Mammary epithelial cell (primary cell): ENCODE measurements at regions of chr2 and their contacts with region 1.

Region 1: GRCh38 chr2:156589381-156590079 is 153.4 kb downstream of the GPD2 start:
- DNase-seq: peak; percentile 25
- H3K4me3 ChIP-seq: no peak overlapping the region
- H3K27ac ChIP-seq: no peak overlapping the region
- H3K4me1 ChIP-seq: no peaks in the 10 kb centered on the region
- H3K27me3 ChIP-seq: no peaks in the 10 kb centered on the region
- CTCF ChIP-seq: peak; percentile 27 to 48

Region 2: DNA sequence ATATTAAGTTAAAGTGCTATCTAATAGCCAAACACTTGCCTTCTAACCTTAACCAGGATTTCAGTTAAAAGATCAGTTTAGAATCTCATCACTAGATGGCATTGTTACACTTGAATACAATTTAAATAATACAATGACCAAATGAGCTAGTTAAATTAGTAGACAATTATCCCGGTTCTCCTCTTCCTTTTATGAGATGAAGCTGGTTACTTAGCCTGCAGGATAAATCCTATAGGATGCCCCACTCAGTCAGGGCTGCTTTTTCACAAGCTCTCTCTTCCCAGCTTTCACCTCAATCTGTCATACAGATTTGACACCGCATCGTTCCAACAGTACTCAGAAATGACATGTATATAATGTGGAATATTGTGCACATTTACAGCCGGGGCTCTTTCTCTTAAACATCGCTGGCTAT is 1212.3 kb before region 1 on chr2:
- CTCF ChIA-PET with region 1: no interaction called
- dilution Hi-C with region 1: no loop called
- in situ Hi-C with region 1: loop called (anchors 25 kb)
- intact Hi-C with region 1: loop called (anchors 1 kb)
- DNase-seq: peak; percentile 5
- H3K4me3 ChIP-seq: no peak overlapping the region
- H3K27ac ChIP-seq: no peak overlapping the region
- H3K4me1 ChIP-seq: no peaks in the 10 kb centered on the region
- H3K27me3 ChIP-seq: no peaks in the 10 kb centered on the region
- CTCF ChIP-seq: peak; percentile 19 to 40

Region 3: DNA sequence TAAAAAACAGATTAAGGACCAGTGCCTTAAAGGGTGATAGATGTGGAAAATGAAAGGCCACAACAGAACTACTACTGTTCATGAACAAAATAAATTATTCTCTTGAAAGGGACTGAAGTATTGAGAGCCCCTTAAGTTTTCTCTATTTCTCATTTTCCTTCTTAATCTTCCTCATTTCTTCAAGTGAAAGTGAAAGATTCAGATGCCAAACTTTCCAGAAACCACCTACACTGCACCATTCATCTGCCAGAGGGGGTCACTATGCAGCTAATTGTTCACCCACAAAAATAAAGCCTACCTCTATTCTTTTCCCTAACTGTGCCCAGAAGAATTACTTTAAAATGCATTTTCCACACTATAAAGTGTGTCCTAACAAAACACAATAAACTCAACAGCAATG is 397.1 kb before region 1 on chr2:
- CTCF ChIA-PET with region 1: no interaction called
- dilution Hi-C with region 1: no loop called
- in situ Hi-C with region 1: no loop called
- intact Hi-C with region 1: loop called (anchors 5 kb)
- DNase-seq: no peak
- H3K4me3 ChIP-seq: no peak overlapping the region
- H3K27ac ChIP-seq: no peak overlapping the region
- H3K4me1 ChIP-seq: no peaks in the 10 kb centered on the region
- H3K27me3 ChIP-seq: no peaks in the 10 kb centered on the region
- CTCF ChIP-seq: peak in 1 of 2 donors; percentile 39

Region 4: DNA sequence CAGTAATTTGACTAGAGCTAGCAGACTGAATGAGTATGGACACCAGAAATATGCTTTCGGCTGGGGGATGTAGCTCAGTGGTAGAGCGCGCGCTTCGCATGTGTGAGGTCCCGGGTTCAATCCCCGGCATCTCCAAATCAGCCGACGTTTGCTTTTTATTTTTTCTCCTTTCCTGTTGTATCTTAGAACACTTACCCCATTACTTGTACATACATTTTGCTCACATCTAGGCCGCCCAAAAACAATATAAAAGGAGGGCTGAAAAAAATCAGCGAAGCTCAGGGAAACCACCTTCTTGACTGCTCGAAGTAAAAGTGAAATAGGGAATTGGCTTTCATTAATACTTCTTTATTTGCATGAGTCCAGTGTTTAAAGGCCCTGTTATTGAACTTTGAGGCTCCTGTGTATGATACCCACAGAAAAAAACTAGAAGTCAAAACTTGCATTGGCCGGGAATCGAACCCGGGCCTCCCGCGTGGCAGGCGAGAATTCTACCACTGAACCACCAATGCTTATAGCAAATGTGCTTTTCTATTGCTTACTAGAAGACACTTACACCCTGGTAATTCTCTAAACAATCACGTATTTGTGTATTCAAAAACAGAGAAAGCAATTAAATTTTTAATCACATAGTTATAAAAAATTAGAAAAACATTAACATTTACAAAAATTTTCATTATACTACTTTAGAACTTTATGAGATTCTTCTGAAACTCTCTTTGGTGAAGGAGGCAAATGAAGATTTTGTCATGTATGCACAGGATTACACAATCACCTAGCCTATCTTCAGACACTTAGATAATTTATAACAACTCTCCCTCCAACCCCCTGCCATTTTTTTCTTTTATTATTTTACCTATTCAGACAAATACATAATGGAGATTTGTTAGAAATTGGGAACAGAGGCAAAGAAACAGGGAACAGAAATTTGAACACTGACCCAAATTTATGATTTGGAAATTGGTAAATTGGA is 188.5 kb before region 1 on chr2:
- CTCF ChIA-PET with region 1: no interaction called
- dilution Hi-C with region 1: no loop called
- in situ Hi-C with region 1: no loop called
- intact Hi-C with region 1: loop called (anchors 2 kb)
- DNase-seq: peak; percentile 77
- H3K4me3 ChIP-seq: peak overlapping the region; percentile 56 to 90 (median 76)
- H3K27ac ChIP-seq: peak overlapping the region; percentile 78
- H3K4me1 ChIP-seq: peaks cover 16% of the 10 kb centered on the region
- H3K27me3 ChIP-seq: no peaks in the 10 kb centered on the region
- CTCF ChIP-seq: no peak

Region 5: DNA sequence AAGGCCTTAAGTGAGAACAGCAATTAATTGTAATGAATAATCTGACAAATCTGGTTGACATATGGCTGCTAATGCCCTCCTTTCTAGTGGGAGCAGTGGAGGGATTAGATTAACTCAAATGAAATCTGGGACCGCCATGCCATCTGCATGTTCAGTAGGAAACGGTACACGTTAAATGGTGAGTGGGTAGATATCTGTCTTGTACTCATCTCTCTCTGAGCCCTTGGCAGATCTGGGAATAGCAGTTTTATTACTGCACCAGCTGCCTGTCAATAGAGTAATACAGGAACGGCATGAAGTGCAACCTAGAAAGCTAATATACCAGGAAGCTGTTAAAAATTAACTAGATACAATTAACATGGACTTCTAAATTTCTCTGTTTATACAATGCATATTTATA is 105.5 kb after region 1 on chr2:
- CTCF ChIA-PET with region 1: no interaction called
- dilution Hi-C with region 1: no loop called
- in situ Hi-C with region 1: no loop called
- intact Hi-C with region 1: no loop called
- DNase-seq: no peak
- H3K4me3 ChIP-seq: no peak overlapping the region
- H3K27ac ChIP-seq: no peak overlapping the region
- H3K4me1 ChIP-seq: no peaks in the 10 kb centered on the region
- H3K27me3 ChIP-seq: no peaks in the 10 kb centered on the region
- CTCF ChIP-seq: no peak

Region 6: DNA sequence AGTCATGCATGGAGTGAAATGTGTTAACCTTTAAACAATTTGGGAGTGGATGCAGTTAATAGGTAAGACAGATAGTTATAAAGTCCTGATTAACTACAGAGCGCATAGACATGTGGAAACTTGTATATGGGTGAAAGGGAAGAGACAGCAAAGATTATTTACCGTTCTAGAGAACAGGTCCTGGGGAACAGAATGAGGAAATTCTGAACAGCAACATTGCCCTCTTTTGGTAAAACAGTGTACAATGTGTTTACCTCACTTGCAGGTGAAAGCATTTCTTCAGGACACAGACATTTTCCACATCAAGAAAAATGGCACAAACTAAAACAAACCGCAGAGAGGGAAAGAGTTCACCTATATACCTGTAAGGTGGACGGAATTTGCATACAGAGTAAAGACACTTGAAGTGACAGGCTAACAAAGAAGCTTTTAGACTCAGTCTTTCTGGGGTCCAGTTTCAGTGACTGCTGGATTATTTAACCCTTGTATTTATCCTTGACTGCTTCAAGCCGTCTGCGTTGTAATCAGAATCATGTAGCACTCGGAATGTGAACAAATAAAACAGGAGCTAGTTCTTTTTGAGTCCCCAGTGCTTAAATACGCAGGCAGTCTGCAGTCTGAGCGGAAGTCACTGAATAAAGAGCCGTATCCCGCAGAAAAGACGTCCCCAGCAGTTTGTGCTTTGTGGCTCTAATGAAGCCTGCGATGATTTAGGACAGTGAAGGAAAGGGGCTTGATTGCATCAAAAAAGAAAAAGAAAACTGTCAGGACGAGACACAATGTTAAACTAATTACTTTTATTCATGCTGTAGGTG is 303.1 kb after region 1 on chr2:
- CTCF ChIA-PET with region 1: no interaction called
- dilution Hi-C with region 1: no loop called
- in situ Hi-C with region 1: loop called in 1 of 2 experiments (anchors 25 kb)
- intact Hi-C with region 1: loop called (anchors 1 kb)
- DNase-seq: peak; percentile 86
- H3K4me3 ChIP-seq: peak overlapping the region; percentile 38 to 45 (median 42)
- H3K27ac ChIP-seq: no peak overlapping the region
- H3K4me1 ChIP-seq: peaks cover 23% of the 10 kb centered on the region
- H3K27me3 ChIP-seq: no peaks in the 10 kb centered on the region
- CTCF ChIP-seq: peak; percentile 67 to 69

Region 7: DNA sequence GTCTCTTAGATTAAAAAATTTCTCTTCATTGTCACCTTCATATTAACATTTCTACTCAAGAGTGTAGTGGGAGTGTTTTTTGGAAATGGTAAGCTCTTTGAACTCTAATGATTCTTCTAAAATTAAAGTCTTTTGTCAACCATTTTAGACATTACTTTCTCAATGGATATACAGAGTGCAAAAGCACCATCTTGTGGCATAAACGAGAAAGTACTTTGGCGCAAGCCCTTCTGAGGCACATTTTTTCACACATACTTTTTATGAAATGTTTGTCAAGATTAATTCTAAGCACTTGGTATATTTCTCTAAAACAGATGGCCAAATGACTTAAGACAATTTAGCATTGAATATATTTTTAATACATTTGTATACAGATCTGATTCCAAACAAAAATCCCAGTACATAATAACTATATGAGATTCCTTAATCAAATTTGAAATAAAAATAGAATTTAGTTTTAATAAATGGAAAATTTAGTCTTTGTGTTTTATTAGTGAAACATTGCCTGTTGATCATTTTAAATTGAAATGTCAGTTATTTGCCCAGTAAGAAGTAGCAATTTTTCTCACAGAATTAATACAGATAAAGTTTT is 604.7 kb after region 1 on chr2:
- CTCF ChIA-PET with region 1: no interaction called
- dilution Hi-C with region 1: no loop called
- in situ Hi-C with region 1: no loop called
- intact Hi-C with region 1: loop called (anchors 1 kb)
- DNase-seq: peak; percentile 49
- H3K4me3 ChIP-seq: no peak overlapping the region
- H3K27ac ChIP-seq: no peak overlapping the region
- H3K4me1 ChIP-seq: no peaks in the 10 kb centered on the region
- H3K27me3 ChIP-seq: no peaks in the 10 kb centered on the region
- CTCF ChIP-seq: peak; percentile 75 to 84